ENCODE measurements at regions of chr11 and their contacts with region 1.

Region 1: DNA sequence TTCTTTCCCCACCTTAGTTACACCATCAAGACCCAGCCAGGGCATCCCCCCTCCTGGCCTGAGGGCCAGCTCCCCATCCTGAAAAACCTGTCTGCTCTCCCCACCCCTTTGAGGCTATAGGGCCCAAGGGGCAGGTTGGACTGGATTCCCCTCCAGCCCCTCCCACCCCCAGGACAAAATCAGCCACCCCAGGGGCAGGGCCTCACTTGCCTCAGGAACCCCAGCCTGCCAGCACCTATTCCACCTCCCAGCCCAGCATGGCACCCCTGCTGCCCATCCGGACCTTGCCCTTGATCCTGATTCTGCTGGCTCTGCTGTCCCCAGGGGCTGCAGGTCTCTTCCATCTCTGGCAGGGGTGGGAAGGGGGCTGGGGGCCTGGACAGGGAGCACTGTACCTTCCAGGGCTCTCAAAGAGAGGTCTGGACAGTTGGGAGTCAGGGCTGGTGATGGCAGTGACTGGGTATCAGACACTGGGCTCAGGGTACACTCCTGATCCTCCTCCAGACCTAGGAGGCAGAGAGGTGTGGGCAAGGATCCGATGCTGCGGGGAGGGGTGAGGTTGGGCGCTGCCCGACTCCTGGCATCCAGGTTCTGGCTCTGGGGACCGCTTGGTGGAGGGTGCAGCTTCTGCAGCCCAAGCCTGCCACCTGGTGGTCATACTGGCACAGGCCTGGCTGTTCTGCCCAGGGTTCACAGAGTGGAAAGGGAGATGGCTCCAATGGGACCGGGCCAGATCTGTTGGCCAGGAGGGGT is at the start of gene UPK2:
- DNase-seq: peak; percentile 88 to 95
- ATAC-seq: peak; percentile 97 to 100 (median 99)
- H3K4me3 ChIP-seq: no peak within 1 kb of the TSS
- H3K27ac ChIP-seq: no peak within 1 kb of the TSS
- H3K4me1 ChIP-seq: no peaks in the 10 kb centered on the region
- H3K27me3 ChIP-seq: peaks cover 0 to 5% (median 3%) of the 10 kb centered on the region in 3 donors
- CTCF ChIP-seq: peak; percentile 94
- total RNA-seq, gene UPK2: not detected

Region 2: GRCh38 chr11:118735203-118735602 is 221.1 kb before region 1 on chr11:
- intact Hi-C with region 1: no loop called
- DNase-seq: no peak
- ATAC-seq: no peak
- H3K4me3 ChIP-seq: no peak overlapping the region
- H3K27ac ChIP-seq: no peak overlapping the region
- H3K4me1 ChIP-seq: no peaks in the 10 kb centered on the region
- H3K27me3 ChIP-seq: no peaks in the 10 kb centered on the region
- CTCF ChIP-seq: no peak

Region 3: DNA sequence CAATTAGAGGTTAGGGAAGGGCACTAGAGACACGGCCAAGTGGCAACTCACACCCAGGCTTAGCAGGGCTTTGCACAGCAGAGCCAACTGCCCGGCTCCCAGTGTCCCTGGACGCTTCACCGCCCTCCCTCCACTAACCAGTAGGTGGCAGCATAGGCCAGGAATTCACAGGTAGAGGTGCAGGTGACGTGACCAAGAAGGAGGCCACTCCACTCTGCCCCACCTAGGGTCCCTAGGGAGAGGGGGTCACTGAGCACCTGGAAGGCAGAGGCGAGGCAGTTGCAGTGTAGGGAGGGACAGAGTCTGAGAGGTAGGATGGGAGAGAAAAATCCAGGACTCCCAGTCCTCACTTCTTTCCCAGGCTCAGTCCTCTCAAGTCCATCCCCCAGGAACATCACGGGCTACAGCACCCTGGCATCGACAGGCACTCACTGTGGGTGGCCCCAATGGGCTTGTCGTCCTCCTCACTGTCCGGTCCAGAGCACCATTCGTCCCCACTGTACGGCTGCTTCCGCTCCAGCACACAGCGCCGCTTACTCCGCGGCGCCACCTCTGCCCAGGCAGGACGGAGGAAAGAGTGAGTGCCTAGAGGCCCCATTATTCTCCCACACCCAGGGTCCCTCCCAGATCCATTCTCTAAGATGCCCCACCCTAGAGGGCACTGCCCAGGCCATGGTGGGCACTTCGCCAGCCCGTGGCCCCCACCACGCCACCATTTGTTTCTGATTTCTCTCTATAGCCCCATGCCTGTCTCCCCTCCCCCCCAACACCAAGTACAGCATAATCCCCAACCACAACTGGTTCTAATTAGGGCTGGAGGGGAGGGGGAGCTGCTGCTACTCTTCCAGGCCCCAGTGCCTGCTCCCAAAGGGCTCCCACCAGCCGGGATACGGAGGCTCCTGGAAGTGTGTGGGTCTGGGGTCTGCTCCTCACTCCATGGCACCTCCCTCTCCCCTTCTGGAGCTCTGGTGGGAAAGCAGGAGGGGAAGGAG is 48.9 kb before region 1 on chr11:
- intact Hi-C with region 1: loop called in 1 of 2 experiments (anchors 1 kb)
- DNase-seq: peak; percentile 83 to 92
- ATAC-seq: peak; percentile 36 to 61 (median 54)
- H3K4me3 ChIP-seq: peak overlapping the region; percentile 16
- H3K27ac ChIP-seq: peak overlapping the region; percentile 46
- H3K4me1 ChIP-seq: peaks cover 48% of the 10 kb centered on the region
- H3K27me3 ChIP-seq: no peaks in the 10 kb centered on the region
- CTCF ChIP-seq: peak; percentile 94

Measured in psoas muscle (tissue), 8 donors.